Ovary (tissue), 10 donors: ENCODE measurements at regions of chr16 and their contacts with region 1.

Region 1: GRCh38 chr16:21984062-21984461 is 16.9 kb downstream of the PDZD9 start:
- DNase-seq: no peak
- H3K4me3 ChIP-seq: no peak overlapping the region
- H3K27ac ChIP-seq: no peak overlapping the region
- H3K4me1 ChIP-seq: peaks cover 1% of the 10 kb centered on the region
- H3K27me3 ChIP-seq: no peaks in the 10 kb centered on the region
- CTCF ChIP-seq: no peak
- EP300 ChIP-seq: no peak
- POLR2A ChIP-seq: no peak

Region 2: DNA sequence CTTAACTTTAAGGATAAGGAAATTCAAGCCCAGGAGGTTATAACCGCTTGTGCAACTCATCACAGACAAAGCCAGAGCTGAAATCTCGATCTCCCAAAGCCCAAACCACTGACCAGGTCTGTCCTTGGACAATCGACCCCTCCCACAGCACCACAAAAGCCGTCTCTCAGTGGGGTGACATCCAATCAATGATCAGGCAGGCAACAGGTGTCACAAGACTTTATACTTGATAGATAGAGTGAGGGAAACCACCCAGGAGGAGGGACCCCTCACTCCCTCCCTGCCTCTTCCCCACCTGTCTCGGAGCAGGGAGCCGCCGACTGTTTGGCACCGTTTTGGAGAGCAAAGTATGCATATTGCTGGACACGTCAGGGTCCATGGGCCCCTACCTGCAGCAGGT is 163.8 kb after region 1 on chr16:
- intact Hi-C with region 1: loop called in 1 of 4 experiments (anchors 1 kb)
- DNase-seq: no peak
- H3K4me3 ChIP-seq: no peak overlapping the region
- H3K27ac ChIP-seq: no peak overlapping the region
- H3K4me1 ChIP-seq: no peaks in the 10 kb centered on the region
- H3K27me3 ChIP-seq: no peaks in the 10 kb centered on the region
- CTCF ChIP-seq: no peak
- EP300 ChIP-seq: no peak
- POLR2A ChIP-seq: no peak